HepG2 (cell line): ENCODE measurements at regions of chr5 and their contacts with region 1.

Region 1: GRCh38 chr5:69334793-69335268 is 2.2 kb upstream of the CCDC125 start:
- DNase-seq: peak; percentile 72
- ATAC-seq: peak; percentile 81
- H3K4me3 ChIP-seq: peak overlapping the region; percentile 51 to 61 (median 51)
- H3K27ac ChIP-seq: no peak overlapping the region
- H3K4me1 ChIP-seq: peaks cover 53% of the 10 kb centered on the region
- H3K27me3 ChIP-seq: no peaks in the 10 kb centered on the region; a peak in 1 of 5 replicates
- CTCF ChIP-seq: peak; percentile 94
- EP300 ChIP-seq: no peak
- POLR2A ChIP-seq: no peak
- RAD21 ChIP-seq: peak; percentile 91

Region 2: GRCh38 chr5:69042915-69043658 is 291.7 kb before region 1 on chr5:
- CTCF ChIA-PET with region 1: interaction called, 7 read pairs
- POLR2A ChIA-PET with region 1: interaction called, 3 read pairs
- in situ Hi-C with region 1: no loop called
- intact Hi-C with region 1: loop called (anchors 5 kb)
- DNase-seq: peak; percentile 87
- ATAC-seq: peak; percentile 87
- H3K4me3 ChIP-seq: peak overlapping the region; percentile 76 to 84 (median 77)
- H3K27ac ChIP-seq: peak overlapping the region; percentile 37
- H3K4me1 ChIP-seq: peaks cover 28% of the 10 kb centered on the region
- H3K27me3 ChIP-seq: no peaks in the 10 kb centered on the region
- CTCF ChIP-seq: peak; percentile 84
- EP300 ChIP-seq: no peak
- POLR2A ChIP-seq: no peak
- RAD21 ChIP-seq: peak; percentile 83

Region 3: GRCh38 chr5:69166686-69167492 is 167.9 kb before region 1 on chr5 and contains the start of gene CCNB1:
- CTCF ChIA-PET with region 1: no interaction called
- POLR2A ChIA-PET with region 1: interaction called, 4 read pairs
- in situ Hi-C with region 1: no loop called
- intact Hi-C with region 1: loop called (anchors 5 kb)
- DNase-seq: peak; percentile 97
- ATAC-seq: peak; percentile 99
- H3K4me3 ChIP-seq: peak within 1 kb of the TSS; percentile 94 to 95 (median 95)
- H3K27ac ChIP-seq: peak within 1 kb of the TSS; percentile 89
- H3K4me1 ChIP-seq: peaks cover 50% of the 10 kb centered on the region
- H3K27me3 ChIP-seq: no peaks in the 10 kb centered on the region
- CTCF ChIP-seq: peak; percentile 68
- EP300 ChIP-seq: no peak
- POLR2A ChIP-seq: peak; percentile 89
- RAD21 ChIP-seq: peak; percentile 34; the same call in 1 of the 2 replicates
- total RNA-seq, gene CCNB1: 316 and 431 TPM in 2 replicates

Region 4: DNA sequence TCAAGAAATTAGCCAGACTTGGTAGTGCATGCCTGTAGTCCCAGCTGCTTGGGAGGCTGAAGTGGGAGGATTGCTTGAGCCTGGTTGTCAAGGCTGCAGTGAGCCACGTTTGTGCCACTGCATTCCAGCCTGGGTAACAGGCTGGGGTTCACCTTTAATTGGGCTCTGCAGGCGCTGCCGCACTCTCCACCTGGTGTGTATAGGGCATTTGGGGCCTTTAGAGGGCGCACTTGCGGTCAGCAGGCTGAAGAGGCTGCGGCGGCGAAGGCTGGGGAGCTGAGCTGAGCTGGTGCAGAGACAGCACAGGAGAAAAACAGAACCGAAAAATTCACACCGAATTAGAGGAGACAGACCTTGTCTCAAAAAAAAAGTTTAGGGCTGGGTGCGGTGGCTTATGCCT is 68.9 kb before region 1 on chr5:
- CTCF ChIA-PET with region 1: interaction called, 4 read pairs
- POLR2A ChIA-PET with region 1: interaction called, 5 read pairs
- in situ Hi-C with region 1: loop called (anchors 10 kb)
- intact Hi-C with region 1: loop called (anchors 1 kb)
- DNase-seq: peak; percentile 15
- ATAC-seq: peak; percentile 95
- H3K4me3 ChIP-seq: no peak overlapping the region
- H3K27ac ChIP-seq: no peak overlapping the region
- H3K4me1 ChIP-seq: no peaks in the 10 kb centered on the region
- H3K27me3 ChIP-seq: no peaks in the 10 kb centered on the region; a peak in 1 of 5 replicates
- CTCF ChIP-seq: peak; percentile 61
- EP300 ChIP-seq: no peak
- POLR2A ChIP-seq: no peak
- RAD21 ChIP-seq: peak; percentile 22; the same call in 1 of the 2 replicates